ENCODE measurements at regions of chr3 and their contacts with region 1.

Region 1: GRCh38 chr3:129627429-129628168 is 21.1 kb upstream of the PLXND1 start:
- DNase-seq: peak; percentile 55 to 82
- ATAC-seq: peak; percentile 71 to 73 (median 71)
- H3K4me3 ChIP-seq: peak overlapping the region; percentile 50
- H3K4me3 Mint-ChIP-seq: peak overlapping the region; percentile 89
- H3K27ac ChIP-seq: peak overlapping the region; percentile 71
- H3K27ac Mint-ChIP-seq: peak overlapping the region; percentile 66 to 85
- H3K4me1 ChIP-seq: peaks cover 38% of the 10 kb centered on the region
- H3K4me1 Mint-ChIP-seq: peaks cover 34 to 38% of the 10 kb centered on the region in 2 donors
- H3K27me3 ChIP-seq: no peaks in the 10 kb centered on the region
- H3K27me3 Mint-ChIP-seq: no peaks in the 10 kb centered on the region
- CTCF ChIP-seq: peak; percentile 75

Region 2: DNA sequence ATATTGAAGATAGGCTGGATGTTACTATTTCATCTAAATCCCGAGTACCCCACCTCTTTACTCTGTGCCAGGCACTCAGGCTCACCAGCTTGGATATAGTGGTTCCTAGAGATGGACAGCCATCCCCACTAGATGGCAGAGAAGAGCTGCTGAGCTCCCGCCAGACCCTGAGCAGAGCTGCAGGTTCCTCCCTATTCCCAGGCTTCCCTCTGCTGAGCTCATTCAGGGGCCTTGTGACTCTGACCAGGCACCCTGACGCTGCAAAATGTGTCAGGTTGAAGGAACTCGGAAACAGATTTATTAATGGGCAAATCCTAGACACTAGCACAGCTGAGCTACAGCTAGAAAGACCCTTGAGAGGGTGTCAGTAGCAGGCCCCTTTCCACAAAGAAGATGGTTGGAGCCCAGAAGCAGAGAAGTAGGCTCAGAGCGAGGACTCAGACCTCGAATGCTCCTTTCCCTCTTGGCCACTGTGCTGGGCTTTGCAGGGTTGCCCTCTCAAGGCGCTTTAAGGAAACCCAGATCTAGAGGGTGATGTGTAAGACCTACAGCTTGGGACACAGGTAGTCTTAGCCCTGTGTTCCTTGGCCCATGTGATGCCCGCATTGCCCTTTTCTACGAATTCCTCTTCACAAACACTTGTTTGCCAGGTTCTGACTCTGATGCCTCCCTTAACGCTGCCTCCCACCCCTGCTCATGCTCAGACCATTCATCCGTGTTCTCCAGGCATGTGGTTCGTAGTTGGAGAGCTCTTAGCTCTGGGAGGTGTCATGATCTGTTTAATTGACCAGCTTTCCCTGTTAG is 137.2 kb before region 1 on chr3:
- intact Hi-C with region 1: loop called (anchors 2 kb)
- DNase-seq: peak; percentile 46 to 81
- ATAC-seq: peak; percentile 87 to 100 (median 99)
- H3K4me3 ChIP-seq: no peak overlapping the region
- H3K4me3 Mint-ChIP-seq: no peak overlapping the region
- H3K27ac ChIP-seq: no peak overlapping the region
- H3K27ac Mint-ChIP-seq: no peak overlapping the region
- H3K4me1 ChIP-seq: peaks cover 5% of the 10 kb centered on the region
- H3K4me1 Mint-ChIP-seq: peaks cover 0 to 9% of the 10 kb centered on the region in 2 donors
- H3K27me3 ChIP-seq: no peaks in the 10 kb centered on the region
- H3K27me3 Mint-ChIP-seq: no peaks in the 10 kb centered on the region
- CTCF ChIP-seq: peak; percentile 94

Region 3: GRCh38 chr3:129824926-129825541 is 197.4 kb after region 1 on chr3:
- intact Hi-C with region 1: loop called (anchors 1 kb)
- DNase-seq: peak in 1 of 2 donors; percentile 80
- ATAC-seq: peak in 2 of 3 donors; percentile 52 to 53
- H3K4me3 ChIP-seq: no peak overlapping the region
- H3K4me3 Mint-ChIP-seq: no peak overlapping the region
- H3K27ac ChIP-seq: no peak overlapping the region
- H3K27ac Mint-ChIP-seq: peak overlapping the region in 1 of 2 donors; percentile 20
- H3K4me1 ChIP-seq: peaks cover 8% of the 10 kb centered on the region
- H3K4me1 Mint-ChIP-seq: peaks cover 19 to 24% of the 10 kb centered on the region in 2 donors
- H3K27me3 ChIP-seq: no peaks in the 10 kb centered on the region
- H3K27me3 Mint-ChIP-seq: no peaks in the 10 kb centered on the region
- CTCF ChIP-seq: peak; percentile 64

Region 4: GRCh38 chr3:129934234-129935123 is 306.9 kb after region 1 on chr3:
- intact Hi-C with region 1: loop called (anchors 1 kb)
- DNase-seq: peak; percentile 27 to 74
- ATAC-seq: peak; percentile 65 to 69 (median 66)
- H3K4me3 ChIP-seq: no peak overlapping the region
- H3K4me3 Mint-ChIP-seq: no peak overlapping the region
- H3K27ac ChIP-seq: no peak overlapping the region
- H3K27ac Mint-ChIP-seq: no peak overlapping the region
- H3K4me1 ChIP-seq: peaks cover 8% of the 10 kb centered on the region
- H3K4me1 Mint-ChIP-seq: peaks cover 11 to 17% of the 10 kb centered on the region in 2 donors
- H3K27me3 ChIP-seq: no peaks in the 10 kb centered on the region
- H3K27me3 Mint-ChIP-seq: peaks cover 3 to 8% of the 10 kb centered on the region in 2 donors
- CTCF ChIP-seq: peak; percentile 97

Region 5: GRCh38 chr3:129994883-129995559 is 367.4 kb after region 1 on chr3:
- intact Hi-C with region 1: loop called (anchors 5 kb)
- DNase-seq: no peak
- ATAC-seq: no peak
- H3K4me3 ChIP-seq: no peak overlapping the region
- H3K4me3 Mint-ChIP-seq: no peak overlapping the region
- H3K27ac ChIP-seq: no peak overlapping the region
- H3K27ac Mint-ChIP-seq: no peak overlapping the region
- H3K4me1 ChIP-seq: no peaks in the 10 kb centered on the region
- H3K4me1 Mint-ChIP-seq: no peaks in the 10 kb centered on the region
- H3K27me3 ChIP-seq: no peaks in the 10 kb centered on the region
- H3K27me3 Mint-ChIP-seq: peaks cover 12 to 18% of the 10 kb centered on the region in 2 donors
- CTCF ChIP-seq: no peak

Region 6: DNA sequence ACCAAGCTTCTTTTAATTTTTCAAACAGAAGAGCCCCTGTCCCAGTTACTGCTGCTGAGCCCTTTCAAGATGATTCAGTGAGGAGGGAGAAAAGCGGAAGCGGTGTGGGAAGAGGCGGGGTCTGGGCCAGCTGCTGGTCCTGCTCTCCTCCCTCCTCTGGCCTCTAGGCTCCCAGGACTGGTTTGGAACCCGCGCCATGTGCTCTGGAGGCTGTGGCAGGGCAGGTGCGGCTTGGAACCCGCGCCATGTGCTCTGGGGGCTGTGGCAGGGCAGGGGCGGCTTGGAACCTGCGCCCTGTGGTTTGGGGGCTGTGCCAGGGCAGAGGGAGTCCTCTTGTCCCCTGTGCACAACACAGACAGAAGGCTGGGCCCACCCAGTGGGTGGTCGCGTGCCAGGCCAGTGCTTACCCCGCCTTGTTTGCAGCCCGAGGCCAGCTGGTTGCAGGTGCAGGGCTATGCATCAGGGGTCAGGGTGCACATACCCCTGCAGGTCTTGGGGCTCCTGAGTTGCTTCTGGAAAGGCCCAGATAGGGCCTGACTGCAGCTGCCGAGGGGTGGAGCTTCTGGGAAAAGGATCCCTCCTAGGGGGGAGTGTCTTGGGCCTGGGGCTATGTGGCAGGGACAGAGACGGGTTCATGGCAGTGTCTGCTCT is 466.3 kb after region 1 on chr3:
- intact Hi-C with region 1: loop called (anchors 10 kb)
- DNase-seq: peak in 1 of 2 donors; percentile 20
- ATAC-seq: no peak
- H3K4me3 ChIP-seq: peak overlapping the region; percentile 7
- H3K4me3 Mint-ChIP-seq: peak overlapping the region; percentile 58
- H3K27ac ChIP-seq: no peak overlapping the region
- H3K27ac Mint-ChIP-seq: peak overlapping the region in 1 of 2 donors; percentile 72
- H3K4me1 ChIP-seq: peaks cover 46% of the 10 kb centered on the region
- H3K4me1 Mint-ChIP-seq: peaks cover 0 to 45% of the 10 kb centered on the region in 2 donors
- H3K27me3 ChIP-seq: no peaks in the 10 kb centered on the region
- H3K27me3 Mint-ChIP-seq: no peaks in the 10 kb centered on the region
- CTCF ChIP-seq: no peak

Measured in natural killer cell (primary cell).